Activated naive CD4-positive, alpha-beta T cell treated with anti-CD3 and anti-CD28 coated beads for 36 hours (primary cell): ENCODE measurements at regions of chr4 and their contacts with region 1.

Region 1: GRCh38 chr4:3880615-3881120 is 114.5 kb downstream of the ADRA2C start:
- DNase-seq: peak; percentile 85
- H3K4me3 Mint-ChIP-seq: no peak overlapping the region
- H3K27ac Mint-ChIP-seq: no peak overlapping the region
- H3K4me1 Mint-ChIP-seq: peaks cover 12% of the 10 kb centered on the region
- H3K27me3 Mint-ChIP-seq: peaks cover 44% of the 10 kb centered on the region

Region 2: GRCh38 chr4:3168029-3168428 is 712.6 kb before region 1 on chr4:
- CTCF ChIA-PET with region 1: no interaction called
- intact Hi-C with region 1: no loop called
- DNase-seq: peak; percentile 27
- H3K4me3 Mint-ChIP-seq: no peak overlapping the region
- H3K27ac Mint-ChIP-seq: peak overlapping the region; percentile 27
- H3K4me1 Mint-ChIP-seq: peaks cover 15% of the 10 kb centered on the region
- H3K27me3 Mint-ChIP-seq: no peaks in the 10 kb centered on the region

Region 3: GRCh38 chr4:3747581-3747904 is 133.1 kb before region 1 on chr4:
- CTCF ChIA-PET with region 1: interaction called, 3 read pairs
- intact Hi-C with region 1: loop called (anchors 5 kb)
- DNase-seq: no peak
- H3K4me3 Mint-ChIP-seq: no peak overlapping the region
- H3K27ac Mint-ChIP-seq: no peak overlapping the region
- H3K4me1 Mint-ChIP-seq: no peaks in the 10 kb centered on the region
- H3K27me3 Mint-ChIP-seq: peaks cover 38% of the 10 kb centered on the region